Breast epithelium (tissue), 4 donors: ENCODE measurements at regions of chr5 and their contacts with region 1.

Region 1: GRCh38 chr5:118762291-118762690 is 226.1 kb downstream of the DTWD2 start:
- DNase-seq: no peak
- H3K4me3 ChIP-seq: no peak overlapping the region
- H3K27ac ChIP-seq: no peak overlapping the region
- H3K4me1 ChIP-seq: no peaks in the 10 kb centered on the region
- H3K27me3 ChIP-seq: no peaks in the 10 kb centered on the region
- CTCF ChIP-seq: no peak
- POLR2A ChIP-seq: no peak

Region 2: DNA sequence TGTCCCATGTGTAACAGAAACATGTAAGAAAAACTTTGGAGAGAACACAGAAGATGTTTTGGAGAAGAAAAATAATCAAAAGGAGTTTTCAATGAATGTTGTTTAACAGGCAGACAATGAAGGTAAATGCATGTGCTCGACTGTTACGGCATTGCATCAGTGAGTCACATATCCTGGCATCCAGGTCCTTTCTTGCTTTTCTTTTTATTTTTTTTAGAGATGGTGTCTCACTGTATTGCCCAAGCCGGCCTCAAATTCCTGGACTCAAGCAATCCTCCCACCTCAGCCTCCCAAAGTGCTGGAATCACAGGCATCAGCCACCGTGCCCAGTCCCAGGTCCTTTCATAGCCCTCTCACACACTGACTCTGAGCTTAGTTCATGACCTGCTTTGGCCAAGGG is 44.3 kb after region 1 on chr5:
- intact Hi-C with region 1: loop called (anchors 2 kb)
- DNase-seq: no peak
- H3K4me3 ChIP-seq: no peak overlapping the region
- H3K27ac ChIP-seq: no peak overlapping the region
- H3K4me1 ChIP-seq: no peaks in the 10 kb centered on the region
- H3K27me3 ChIP-seq: no peaks in the 10 kb centered on the region
- CTCF ChIP-seq: no peak
- POLR2A ChIP-seq: no peak